ENCODE measurements at regions of chr16 and their contacts with region 1.

Region 1: DNA sequence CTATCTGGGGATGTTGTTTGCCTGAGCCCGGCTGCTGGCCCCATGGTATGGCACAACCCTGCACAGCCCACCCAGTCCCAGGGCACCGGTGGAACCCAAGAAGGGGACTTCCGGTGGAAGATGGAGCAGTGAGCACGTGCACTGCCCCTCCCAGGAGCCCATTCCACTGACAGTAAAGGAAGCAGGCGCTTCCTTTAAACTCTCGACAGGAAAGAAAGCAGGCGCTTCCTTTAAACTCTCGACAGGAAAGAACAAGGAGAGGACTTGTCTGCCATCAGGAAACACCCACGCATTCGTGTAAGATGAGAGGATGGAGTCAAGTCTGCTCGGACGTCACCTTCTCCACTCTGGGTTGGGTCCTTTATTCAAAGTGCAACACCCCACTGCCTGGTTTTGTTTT is 53.7 kb downstream of the IL21R start:
- DNase-seq: no peak
- ATAC-seq: no peak

Region 2: DNA sequence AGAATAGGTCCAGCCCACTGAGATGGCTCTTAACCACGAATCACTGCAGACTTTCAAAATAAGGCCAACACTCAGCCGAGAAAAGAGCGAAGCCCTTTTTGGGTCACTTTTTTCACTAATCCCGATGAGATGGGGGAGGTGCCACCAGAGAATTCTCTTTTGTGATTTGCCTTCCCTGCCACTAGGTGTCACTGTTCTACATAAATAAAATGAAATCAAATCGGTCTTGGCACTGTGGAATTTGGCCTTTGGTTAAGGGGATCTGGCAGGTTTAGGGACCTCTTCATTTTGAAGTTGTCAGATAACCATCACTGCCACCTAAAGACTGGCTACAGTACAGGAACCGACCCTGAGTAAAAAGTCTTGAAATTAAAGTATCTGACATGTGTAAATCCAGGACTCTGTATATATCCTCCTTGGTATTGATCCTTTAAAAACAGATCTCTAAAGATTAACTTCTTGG is 1616.9 kb before region 1 on chr16:
- intact Hi-C with region 1: loop called (anchors 5 kb)
- DNase-seq: no peak
- ATAC-seq: no peak

Region 3: DNA sequence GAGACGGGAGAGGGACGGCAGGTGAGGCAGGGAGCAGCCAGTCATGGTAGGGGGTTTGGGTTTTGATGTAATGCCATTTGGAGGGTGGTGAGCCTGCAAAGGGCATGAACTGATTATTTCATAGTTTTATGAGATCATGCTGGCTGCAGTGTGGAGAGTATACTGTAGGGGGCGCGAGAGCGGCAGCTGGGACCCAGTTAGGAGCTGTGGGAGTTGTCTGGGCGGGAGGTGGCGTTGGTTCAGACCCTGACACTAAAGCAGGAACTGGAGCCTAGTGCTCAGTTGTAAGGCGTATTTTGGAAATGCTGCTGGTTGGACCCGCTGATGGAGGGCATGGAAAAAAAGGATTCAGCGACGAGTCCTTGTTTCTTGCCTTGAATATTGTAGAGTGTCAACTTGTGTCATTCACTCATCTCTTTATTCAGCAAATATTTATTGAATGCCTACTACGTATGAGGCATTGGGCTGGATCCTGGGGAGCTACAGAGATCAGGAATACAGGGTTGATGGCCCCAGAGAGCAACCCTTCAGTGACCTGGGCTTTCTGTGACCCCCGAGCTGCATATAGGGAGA is 276.1 kb before region 1 on chr16:
- intact Hi-C with region 1: loop called (anchors 2 kb)
- DNase-seq: peak; percentile 93
- ATAC-seq: peak; percentile 97

Region 4: GRCh38 chr16:27222249-27223225 is 233.2 kb before region 1 on chr16:
- intact Hi-C with region 1: loop called (anchors 5 kb)
- DNase-seq: peak; percentile 84
- ATAC-seq: peak; percentile 85

Region 5: DNA sequence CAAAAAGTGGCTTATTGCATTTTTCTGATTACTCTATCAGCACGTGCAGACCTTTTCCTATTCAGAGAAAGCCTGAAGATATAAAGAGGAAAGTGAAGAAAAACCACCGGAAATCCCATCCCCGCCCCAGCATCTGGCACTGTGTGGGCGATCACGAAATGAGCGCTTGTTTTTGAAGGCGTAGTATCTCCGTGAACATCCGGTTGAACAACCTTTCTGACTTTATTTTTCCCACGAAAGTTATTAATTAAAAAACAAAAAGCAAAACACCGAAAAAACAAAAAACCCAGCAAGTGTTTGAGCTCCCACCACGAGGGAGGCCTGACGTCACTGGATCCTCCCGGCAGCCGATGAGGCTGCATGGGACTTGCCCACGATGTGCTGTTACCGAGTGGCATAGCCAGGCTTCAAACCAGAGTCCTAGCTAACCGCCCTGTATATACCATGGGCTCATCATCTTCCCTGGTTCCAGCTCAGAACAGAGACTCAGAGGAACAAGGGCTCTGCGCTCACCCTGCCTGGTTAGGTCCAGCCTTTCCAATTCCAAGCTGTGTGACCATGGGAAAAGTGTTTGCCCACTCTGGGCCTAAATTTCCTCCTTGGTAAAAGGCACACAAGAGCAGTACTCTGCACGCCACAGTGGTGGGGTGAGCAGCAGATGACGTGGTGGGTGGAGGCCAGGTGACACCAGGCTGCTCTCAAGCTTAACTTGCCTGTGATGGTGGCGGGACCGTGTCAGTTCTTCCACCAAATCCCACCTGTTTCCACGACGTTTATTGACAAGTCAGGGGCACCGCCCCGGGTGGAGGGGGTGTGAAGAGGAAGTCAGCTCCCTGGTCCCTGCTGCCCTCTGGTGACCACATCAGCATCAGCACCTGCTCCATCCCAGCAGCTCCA is 88.0 kb before region 1 on chr16:
- intact Hi-C with region 1: loop called (anchors 2 kb)
- DNase-seq: peak; percentile 91
- ATAC-seq: peak; percentile 85